Activated naive CD8-positive, alpha-beta T cell treated with anti-CD3 and anti-CD28 coated beads, Interleukin-2, amount 10 ng/mL, durations not matched to agents 7 days and 5 days (primary cell): ENCODE measurements at regions of chr19 and their contacts with region 1.

Region 1: GRCh38 chr19:19900729-19901444 is at the start of gene ZNF93:
- DNase-seq: peak; percentile 83
- ATAC-seq: peak; percentile 96
- H3K4me3 Mint-ChIP-seq: peak within 1 kb of the TSS; percentile 93
- H3K27ac Mint-ChIP-seq: peak within 1 kb of the TSS; percentile 93
- H3K4me1 Mint-ChIP-seq: peaks cover 25% of the 10 kb centered on the region
- H3K27me3 Mint-ChIP-seq: no peaks in the 10 kb centered on the region
- total RNA-seq, gene ZNF93: 20.3 to 22.2 TPM

Region 2: GRCh38 chr19:19732579-19733501 is 168.0 kb before region 1 on chr19 and contains the start of gene ZNF14:
- POLR2A ChIA-PET with region 1: interaction called, 11 read pairs
- DNase-seq: peak; percentile 85
- ATAC-seq: peak; percentile 100
- H3K4me3 Mint-ChIP-seq: peak within 1 kb of the TSS; percentile 99
- H3K27ac Mint-ChIP-seq: peak within 1 kb of the TSS; percentile 97
- H3K4me1 Mint-ChIP-seq: peaks cover 16% of the 10 kb centered on the region
- H3K27me3 Mint-ChIP-seq: no peaks in the 10 kb centered on the region
- total RNA-seq, gene ZNF14: 13.7 to 16.9 TPM

Region 3: DNA sequence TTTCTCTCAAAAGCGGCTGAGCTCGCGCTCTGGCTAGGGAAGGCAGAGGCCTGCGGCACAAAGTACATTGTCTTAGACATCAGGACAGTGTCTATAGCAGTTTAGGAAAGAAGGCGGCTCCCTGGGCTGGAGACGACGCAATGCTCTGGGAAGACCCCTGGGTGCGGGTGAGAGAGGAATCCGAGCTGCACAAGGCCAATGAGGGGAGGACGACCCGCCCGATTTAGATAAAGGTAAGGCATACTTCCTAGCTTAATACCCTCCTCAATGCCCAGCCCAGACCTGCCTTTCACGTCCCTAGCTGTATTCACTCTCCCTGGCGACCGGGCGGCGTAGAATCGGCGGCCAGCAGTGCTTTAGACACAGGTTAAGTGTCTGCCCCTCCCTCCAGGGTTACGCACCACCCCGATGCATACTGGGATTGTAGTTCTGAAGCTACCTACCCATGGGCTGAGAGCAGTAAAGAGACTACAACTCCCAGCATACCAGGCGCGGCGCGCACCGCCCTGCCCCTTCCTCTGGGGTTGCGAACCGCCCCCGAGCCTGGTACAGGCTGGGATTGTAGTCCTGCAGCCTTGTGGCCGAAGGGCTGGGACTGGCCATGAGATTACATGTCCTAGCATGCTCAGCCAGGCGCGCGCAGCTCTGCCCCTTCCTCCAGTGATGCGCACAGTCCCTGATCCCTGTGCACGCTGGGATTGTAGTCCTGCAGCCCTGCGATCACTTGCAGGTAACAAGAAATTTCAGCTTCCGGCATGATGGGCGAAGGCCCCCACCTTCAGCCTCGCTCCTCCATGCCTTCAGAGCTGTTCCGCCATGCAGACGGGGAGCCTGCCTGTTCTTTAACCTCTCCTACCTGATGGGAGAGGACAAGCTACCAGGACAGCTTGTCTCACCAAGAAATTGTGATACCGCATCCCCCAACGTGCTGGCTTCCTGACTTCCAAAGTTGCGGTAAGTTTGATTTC is 124.6 kb before region 1 on chr19:
- POLR2A ChIA-PET with region 1: interaction called, 25 read pairs
- DNase-seq: peak; percentile 90
- ATAC-seq: peak; percentile 99
- H3K4me3 Mint-ChIP-seq: peak overlapping the region; percentile 93
- H3K27ac Mint-ChIP-seq: peak overlapping the region; percentile 89
- H3K4me1 Mint-ChIP-seq: peaks cover 26% of the 10 kb centered on the region
- H3K27me3 Mint-ChIP-seq: no peaks in the 10 kb centered on the region

Region 4: DNA sequence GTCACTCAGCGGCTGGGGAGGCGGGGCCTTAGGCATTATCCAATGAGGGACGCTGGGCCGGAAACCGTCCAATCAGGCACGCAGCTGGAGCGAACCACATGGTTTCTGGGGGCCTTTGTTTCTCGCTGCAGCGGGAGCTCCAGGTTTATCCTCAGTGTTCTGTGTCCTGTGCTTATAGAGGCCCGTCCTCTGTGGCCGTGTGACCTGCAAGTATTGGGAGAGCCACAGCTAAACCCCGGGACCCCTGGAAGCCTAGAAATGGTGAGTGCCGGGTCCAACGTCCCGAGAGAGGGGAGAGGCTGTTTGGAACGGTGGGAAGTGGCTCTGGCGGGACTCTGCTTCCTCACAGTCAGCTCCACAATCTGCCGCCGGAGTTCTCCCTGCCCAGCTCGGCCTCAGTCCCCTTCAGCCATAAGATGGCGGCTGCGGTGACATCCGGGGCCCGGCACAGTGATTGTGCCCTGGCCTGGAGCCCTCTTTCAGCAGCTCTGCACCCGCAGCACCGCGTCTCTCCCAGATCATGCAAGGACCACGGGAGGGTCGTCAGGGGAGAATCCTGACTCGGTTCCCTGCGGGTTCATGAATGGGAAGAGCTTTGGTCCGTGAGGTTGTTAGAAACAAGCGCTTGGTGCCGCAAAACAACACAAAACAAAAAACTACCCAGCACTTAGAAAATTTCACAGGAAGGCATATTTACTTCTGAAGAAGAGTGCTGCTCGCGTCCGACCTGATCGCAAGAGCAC is 35.0 kb before region 1 on chr19 and contains the start of gene ZNF253:
- POLR2A ChIA-PET with region 1: interaction called, 62 read pairs
- DNase-seq: peak; percentile 91
- ATAC-seq: peak; percentile 93
- H3K4me3 Mint-ChIP-seq: peak within 1 kb of the TSS; percentile 97
- H3K27ac Mint-ChIP-seq: peak within 1 kb of the TSS; percentile 98
- H3K4me1 Mint-ChIP-seq: peaks cover 13% of the 10 kb centered on the region
- H3K27me3 Mint-ChIP-seq: no peaks in the 10 kb centered on the region
- total RNA-seq, gene ZNF253: 25.6 to 32.4 TPM